Activated naive CD4-positive, alpha-beta T cell treated with anti-CD3 and anti-CD28 coated beads for 36 hours (primary cell): ENCODE measurements at regions of chr7 and their contacts with region 1.

Region 1: DNA sequence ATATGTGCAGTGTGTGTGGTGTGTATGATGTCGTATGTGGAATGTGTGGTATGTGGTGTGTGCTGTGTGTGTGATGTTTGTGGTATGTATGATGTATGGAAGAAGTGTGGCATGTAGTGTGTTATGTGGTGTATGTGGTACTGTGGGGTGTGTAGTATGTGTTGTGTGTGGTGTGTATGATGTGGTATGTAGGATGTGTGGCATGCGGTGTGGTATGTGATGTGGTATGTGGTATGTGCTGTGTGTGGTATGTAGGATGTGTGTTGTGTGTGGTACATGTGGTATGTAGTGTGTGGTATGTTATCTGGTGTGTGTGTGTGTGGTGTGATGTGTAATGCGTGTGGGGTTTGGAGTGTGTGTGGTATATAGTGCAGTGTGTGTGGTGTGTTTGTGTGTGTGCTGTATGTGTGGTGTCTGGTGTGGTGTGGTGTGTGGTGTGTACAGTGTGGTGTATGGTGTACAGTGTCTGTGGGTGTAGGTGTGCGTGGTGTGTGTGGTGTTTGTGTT is 129.6 kb downstream of the ATP6V0E2 start:
- DNase-seq: no peak
- H3K4me3 Mint-ChIP-seq: no peak overlapping the region
- H3K27ac Mint-ChIP-seq: no peak overlapping the region
- H3K4me1 Mint-ChIP-seq: no peaks in the 10 kb centered on the region
- H3K27me3 Mint-ChIP-seq: no peaks in the 10 kb centered on the region

Region 2: GRCh38 chr7:149547126-149547525 is 456.2 kb before region 1 on chr7:
- CTCF ChIA-PET with region 1: no interaction called
- intact Hi-C with region 1: no loop called
- DNase-seq: no peak
- H3K4me3 Mint-ChIP-seq: no peak overlapping the region
- H3K27ac Mint-ChIP-seq: no peak overlapping the region
- H3K4me1 Mint-ChIP-seq: peaks cover 7% of the 10 kb centered on the region
- H3K27me3 Mint-ChIP-seq: no peaks in the 10 kb centered on the region

Region 3: DNA sequence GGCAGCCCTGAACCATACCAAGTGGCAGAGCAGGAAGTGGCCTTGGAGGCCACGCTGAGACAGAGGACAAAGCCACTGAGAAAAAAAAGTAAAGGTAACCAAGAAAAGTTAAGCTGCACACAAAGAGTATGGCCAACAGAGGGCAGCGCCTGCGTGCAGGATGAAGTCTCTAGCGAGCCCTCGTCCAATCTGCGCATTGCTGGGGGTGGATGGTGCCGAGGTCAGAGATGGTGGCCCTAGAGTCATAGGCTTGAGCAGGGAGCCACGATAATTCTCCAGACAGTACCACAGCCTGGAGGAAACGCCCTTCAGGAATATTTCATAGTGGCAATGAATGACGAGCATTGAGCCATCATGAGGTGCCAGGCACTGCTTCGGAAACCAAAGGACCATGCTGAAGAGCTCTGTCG is 119.9 kb before region 1 on chr7:
- CTCF ChIA-PET with region 1: interaction called, 6 read pairs
- intact Hi-C with region 1: loop called (anchors 5 kb)
- DNase-seq: peak; percentile 80
- H3K4me3 Mint-ChIP-seq: no peak overlapping the region
- H3K27ac Mint-ChIP-seq: no peak overlapping the region
- H3K4me1 Mint-ChIP-seq: peaks cover 8% of the 10 kb centered on the region
- H3K27me3 Mint-ChIP-seq: no peaks in the 10 kb centered on the region